Activated naive CD4-positive, alpha-beta T cell treated with anti-CD3 and anti-CD28 coated beads, Interleukin-2, amount 10 ng/mL, durations not matched to agents 7 days and 5 days (primary cell): ENCODE measurements at regions of chr15 and their contacts with region 1.

Region 1: GRCh38 chr15:66369773-66370651 is 13.5 kb upstream of the TIPIN start:
- DNase-seq: peak; percentile 53
- H3K4me3 Mint-ChIP-seq: peak overlapping the region; percentile 48
- H3K27ac Mint-ChIP-seq: peak overlapping the region; percentile 91
- H3K4me1 Mint-ChIP-seq: peaks cover 27% of the 10 kb centered on the region
- H3K27me3 Mint-ChIP-seq: no peaks in the 10 kb centered on the region

Region 2: GRCh38 chr15:66356345-66357236 is 13.4 kb before region 1 on chr15 and contains the start of gene TIPIN:
- CTCF ChIA-PET with region 1: no interaction called
- DNase-seq: peak; percentile 99
- H3K4me3 Mint-ChIP-seq: peak within 1 kb of the TSS; percentile 99
- H3K27ac Mint-ChIP-seq: peak within 1 kb of the TSS; percentile 97
- H3K4me1 Mint-ChIP-seq: peaks cover 39% of the 10 kb centered on the region
- H3K27me3 Mint-ChIP-seq: no peaks in the 10 kb centered on the region

Region 3: DNA sequence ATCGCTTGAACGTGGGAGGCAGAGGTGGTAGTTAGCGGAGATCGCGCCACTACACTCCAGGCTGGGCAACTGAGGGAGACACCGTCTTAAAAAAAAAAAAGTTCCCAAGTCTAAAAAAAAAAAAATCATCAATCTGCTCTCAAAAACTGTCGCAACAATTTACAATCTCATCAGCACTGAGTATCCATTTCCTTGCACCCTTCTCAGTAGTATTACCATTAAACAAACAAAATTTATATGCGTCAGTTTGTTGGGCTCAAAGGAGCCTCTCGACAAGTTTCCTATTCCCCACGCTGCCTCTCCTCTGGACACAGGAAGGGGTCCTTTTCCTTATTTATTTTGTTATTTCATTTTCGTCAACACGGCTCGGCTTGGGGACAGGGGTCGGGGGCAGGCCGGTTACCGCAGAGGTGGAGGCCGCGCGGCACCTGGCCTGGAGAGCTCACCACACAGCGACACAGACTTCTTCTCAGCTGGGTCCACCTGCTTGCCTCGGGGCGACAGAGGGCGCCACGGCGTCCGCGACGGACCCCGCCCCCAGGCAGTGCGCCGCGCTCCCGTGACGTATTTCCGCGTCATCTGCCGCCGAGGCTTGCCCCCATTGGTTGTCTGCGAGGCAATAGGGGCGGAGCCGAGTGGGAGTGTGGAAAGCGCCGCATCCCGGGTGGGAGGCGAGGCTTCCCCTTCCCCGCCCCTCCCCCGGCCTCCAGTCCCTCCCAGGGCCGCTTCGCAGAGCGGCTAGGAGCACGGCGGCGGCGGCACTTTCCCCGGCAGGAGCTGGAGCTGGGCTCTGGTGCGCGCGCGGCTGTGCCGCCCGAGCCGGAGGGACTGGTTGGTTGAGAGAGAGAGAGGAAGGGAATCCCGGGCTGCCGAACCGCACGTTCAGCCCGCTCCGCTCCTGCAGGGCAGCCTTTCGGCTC is 16.5 kb after region 1 on chr15 and contains the start of gene MAP2K1:
- CTCF ChIA-PET with region 1: interaction called, 10 read pairs
- DNase-seq: peak; percentile 99
- H3K4me3 Mint-ChIP-seq: peak within 1 kb of the TSS; percentile 99
- H3K27ac Mint-ChIP-seq: peak within 1 kb of the TSS; percentile 99
- H3K4me1 Mint-ChIP-seq: peaks cover 49% of the 10 kb centered on the region
- H3K27me3 Mint-ChIP-seq: no peaks in the 10 kb centered on the region